MCF 10A (cell line): ENCODE measurements at regions of chr6 and their contacts with region 1.

Region 1: GRCh38 chr6:46848684-46849360 is 55.6 kb downstream of the MEP1A start:
- DNase-seq: peak; percentile 78
- H3K4me3 Mint-ChIP-seq: no peak overlapping the region
- H3K27ac Mint-ChIP-seq: no peak overlapping the region
- H3K4me1 Mint-ChIP-seq: peaks cover 6% of the 10 kb centered on the region
- H3K27me3 Mint-ChIP-seq: no peaks in the 10 kb centered on the region
- CTCF ChIP-seq: peak; percentile 98

Region 2: GRCh38 chr6:46704562-46704961 is 144.3 kb before region 1 on chr6:
- CTCF ChIA-PET with region 1: interaction called, 7 read pairs
- POLR2A ChIA-PET with region 1: no interaction called
- intact Hi-C with region 1: loop called (anchors 1 kb)
- DNase-seq: peak; percentile 53
- H3K4me3 Mint-ChIP-seq: no peak overlapping the region
- H3K27ac Mint-ChIP-seq: no peak overlapping the region
- H3K4me1 Mint-ChIP-seq: peaks cover 1% of the 10 kb centered on the region
- H3K27me3 Mint-ChIP-seq: no peaks in the 10 kb centered on the region
- CTCF ChIP-seq: peak; percentile 38

Region 3: DNA sequence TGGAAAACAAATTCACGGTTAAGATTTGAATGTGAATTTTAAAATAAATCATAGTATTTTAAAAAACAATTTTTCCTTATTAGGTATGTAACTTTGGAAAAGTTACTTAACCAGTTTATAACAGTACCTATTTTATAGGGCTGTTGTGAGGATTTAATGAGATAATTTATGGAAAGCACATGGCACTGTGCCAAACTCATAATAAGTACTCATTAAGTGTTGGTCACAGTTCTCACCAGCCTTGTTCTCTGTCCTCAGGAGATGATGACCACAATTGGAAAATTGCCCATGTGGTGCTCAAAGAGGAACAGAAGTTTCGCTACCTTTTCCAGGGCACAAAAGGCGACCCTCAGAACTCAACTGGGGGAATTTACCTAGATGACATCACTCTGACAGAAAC is 16.0 kb before region 1 on chr6:
- CTCF ChIA-PET with region 1: interaction called, 12 read pairs
- POLR2A ChIA-PET with region 1: no interaction called
- intact Hi-C with region 1: no loop called
- DNase-seq: no peak
- H3K4me3 Mint-ChIP-seq: no peak overlapping the region
- H3K27ac Mint-ChIP-seq: no peak overlapping the region
- H3K4me1 Mint-ChIP-seq: no peaks in the 10 kb centered on the region
- H3K27me3 Mint-ChIP-seq: no peaks in the 10 kb centered on the region
- CTCF ChIP-seq: no peak

Region 4: DNA sequence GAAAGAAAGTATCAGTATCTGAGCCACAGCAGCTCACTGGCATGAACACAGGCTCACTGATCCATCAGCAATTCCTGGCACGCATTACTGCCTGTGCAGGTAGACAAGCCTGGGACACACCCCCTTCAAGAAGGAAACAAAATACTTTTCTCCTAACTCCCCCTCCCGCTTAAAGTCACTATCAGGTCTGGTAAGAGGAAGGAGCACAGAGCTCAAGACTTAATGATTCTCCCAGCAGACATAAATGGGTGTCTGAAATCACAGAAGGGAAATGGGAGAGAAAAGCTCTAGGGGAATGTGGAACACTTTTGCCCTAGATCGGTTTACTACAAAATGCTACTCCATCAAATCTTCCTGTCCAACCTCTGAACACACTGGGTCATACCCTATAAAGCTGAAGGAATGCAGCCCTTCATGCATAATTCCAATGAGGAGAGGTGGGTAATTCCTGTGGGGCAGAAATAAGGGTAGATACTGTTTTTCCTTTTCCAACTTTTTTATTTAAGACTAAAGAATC is 193.5 kb after region 1 on chr6 and contains the start of gene ADGRF1:
- CTCF ChIA-PET with region 1: interaction called, 38 read pairs
- POLR2A ChIA-PET with region 1: interaction called, 4 read pairs
- intact Hi-C with region 1: loop called (anchors 1 kb)
- DNase-seq: peak; percentile 61
- H3K4me3 Mint-ChIP-seq: peak within 1 kb of the TSS; percentile 23
- H3K27ac Mint-ChIP-seq: peak within 1 kb of the TSS; percentile 82
- H3K4me1 Mint-ChIP-seq: peaks cover 48% of the 10 kb centered on the region
- H3K27me3 Mint-ChIP-seq: no peaks in the 10 kb centered on the region
- CTCF ChIP-seq: no peak
- total RNA-seq, gene ADGRF1: 1.3 and 3.5 TPM in 2 replicates

Region 5: DNA sequence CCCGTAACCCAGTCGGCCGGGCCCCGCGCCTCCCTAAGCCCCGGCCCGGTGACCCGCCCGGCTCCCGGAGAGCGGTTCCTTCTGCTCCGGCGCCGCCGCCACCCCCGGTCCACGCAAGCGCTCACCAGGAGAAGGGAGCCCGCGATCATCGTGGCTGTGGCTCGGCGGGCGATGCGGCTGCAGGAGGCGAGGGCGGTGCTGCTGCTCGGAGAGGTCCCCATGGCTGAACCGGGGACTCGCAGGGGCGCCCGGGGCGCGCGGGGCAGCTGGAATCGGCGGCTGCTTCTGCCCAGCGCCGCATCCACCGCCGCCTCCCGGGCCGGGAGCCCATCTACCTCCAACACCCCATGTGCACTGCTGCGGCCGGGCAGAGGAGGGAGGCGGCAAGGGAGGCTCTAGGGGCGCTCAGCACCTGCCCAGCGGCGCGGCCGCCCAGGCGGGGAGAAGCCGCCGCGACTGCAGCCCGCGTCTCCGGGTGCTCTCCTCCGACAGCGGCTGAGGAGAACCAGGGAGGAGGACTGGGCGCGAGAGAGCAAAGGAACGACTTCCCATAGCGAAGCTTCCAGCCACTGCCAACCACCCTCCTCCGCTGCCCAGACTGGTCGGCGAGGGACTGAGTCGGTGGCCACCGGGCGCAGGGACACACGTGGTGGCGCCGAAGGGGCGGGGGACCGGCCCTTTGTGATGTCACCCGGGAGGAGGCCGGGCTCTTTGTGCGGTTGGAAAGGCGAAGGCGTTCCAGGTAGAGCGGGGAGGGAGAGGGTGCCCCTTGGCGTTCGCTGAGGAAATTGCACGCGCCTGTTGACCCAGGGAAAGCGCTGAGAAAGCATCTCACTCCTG is 460.7 kb after region 1 on chr6 and contains the start of gene TNFRSF21:
- CTCF ChIA-PET with region 1: interaction called, 3 read pairs
- POLR2A ChIA-PET with region 1: no interaction called
- intact Hi-C with region 1: loop called (anchors 1 kb)
- DNase-seq: peak; percentile 91
- H3K4me3 Mint-ChIP-seq: peak within 1 kb of the TSS; percentile 89
- H3K27ac Mint-ChIP-seq: peak within 1 kb of the TSS; percentile 77
- H3K4me1 Mint-ChIP-seq: peaks cover 12% of the 10 kb centered on the region
- H3K27me3 Mint-ChIP-seq: no peaks in the 10 kb centered on the region
- CTCF ChIP-seq: peak; percentile 90
- total RNA-seq, gene TNFRSF21: 17.8 and 19.3 TPM in 2 replicates